CD4-positive, alpha-beta T cell (primary cell): ENCODE measurements at regions of chr9 and their contacts with region 1.

Region 1: GRCh38 chr9:34637356-34638137 is at the start of gene SIGMAR1:
- DNase-seq: peak; percentile 85 to 95 (median 92)
- ATAC-seq: peak; percentile 92
- H3K4me3 ChIP-seq: peak within 1 kb of the TSS; percentile 86
- H3K4me3 Mint-ChIP-seq: peak within 1 kb of the TSS; percentile 89
- H3K27ac ChIP-seq: peak within 1 kb of the TSS; percentile 72 to 84
- H3K27ac Mint-ChIP-seq: peak within 1 kb of the TSS; percentile 89
- H3K4me1 ChIP-seq: peaks cover 41% of the 10 kb centered on the region
- H3K4me1 Mint-ChIP-seq: peaks cover 45% of the 10 kb centered on the region
- H3K27me3 ChIP-seq: no peaks in the 10 kb centered on the region
- H3K27me3 Mint-ChIP-seq: no peaks in the 10 kb centered on the region
- CTCF ChIP-seq: no peak
- total RNA-seq, gene SIGMAR1: 11.7 to 12.1 TPM

Region 2: GRCh38 chr9:34048923-34049697 is 588.4 kb before region 1 on chr9:
- CTCF ChIA-PET with region 1: no interaction called
- POLR2A ChIA-PET with region 1: no interaction called
- intact Hi-C with region 1: loop called in 1 of 2 experiments (anchors 10 kb)
- DNase-seq: peak; percentile 92 to 98 (median 96)
- ATAC-seq: peak; percentile 82
- H3K4me3 ChIP-seq: peak overlapping the region; percentile 98
- H3K4me3 Mint-ChIP-seq: peak overlapping the region; percentile 92
- H3K27ac ChIP-seq: peak overlapping the region; percentile 83 to 93
- H3K27ac Mint-ChIP-seq: peak overlapping the region; percentile 97
- H3K4me1 ChIP-seq: peaks cover 26% of the 10 kb centered on the region
- H3K4me1 Mint-ChIP-seq: peaks cover 34% of the 10 kb centered on the region
- H3K27me3 ChIP-seq: no peaks in the 10 kb centered on the region
- H3K27me3 Mint-ChIP-seq: no peaks in the 10 kb centered on the region
- CTCF ChIP-seq: no peak

Region 3: GRCh38 chr9:34500623-34501267 is 136.8 kb before region 1 on chr9:
- CTCF ChIA-PET with region 1: no interaction called
- POLR2A ChIA-PET with region 1: no interaction called
- intact Hi-C with region 1: loop called in 1 of 2 experiments (anchors 5 kb)
- DNase-seq: peak; percentile 47 to 81 (median 66)
- ATAC-seq: peak; percentile 94
- H3K4me3 ChIP-seq: no peak overlapping the region
- H3K4me3 Mint-ChIP-seq: no peak overlapping the region
- H3K27ac ChIP-seq: no peak overlapping the region
- H3K27ac Mint-ChIP-seq: no peak overlapping the region
- H3K4me1 ChIP-seq: peaks cover 3% of the 10 kb centered on the region
- H3K4me1 Mint-ChIP-seq: no peaks in the 10 kb centered on the region
- H3K27me3 ChIP-seq: no peaks in the 10 kb centered on the region
- H3K27me3 Mint-ChIP-seq: peaks cover 10% of the 10 kb centered on the region
- CTCF ChIP-seq: peak; percentile 97

Region 4: DNA sequence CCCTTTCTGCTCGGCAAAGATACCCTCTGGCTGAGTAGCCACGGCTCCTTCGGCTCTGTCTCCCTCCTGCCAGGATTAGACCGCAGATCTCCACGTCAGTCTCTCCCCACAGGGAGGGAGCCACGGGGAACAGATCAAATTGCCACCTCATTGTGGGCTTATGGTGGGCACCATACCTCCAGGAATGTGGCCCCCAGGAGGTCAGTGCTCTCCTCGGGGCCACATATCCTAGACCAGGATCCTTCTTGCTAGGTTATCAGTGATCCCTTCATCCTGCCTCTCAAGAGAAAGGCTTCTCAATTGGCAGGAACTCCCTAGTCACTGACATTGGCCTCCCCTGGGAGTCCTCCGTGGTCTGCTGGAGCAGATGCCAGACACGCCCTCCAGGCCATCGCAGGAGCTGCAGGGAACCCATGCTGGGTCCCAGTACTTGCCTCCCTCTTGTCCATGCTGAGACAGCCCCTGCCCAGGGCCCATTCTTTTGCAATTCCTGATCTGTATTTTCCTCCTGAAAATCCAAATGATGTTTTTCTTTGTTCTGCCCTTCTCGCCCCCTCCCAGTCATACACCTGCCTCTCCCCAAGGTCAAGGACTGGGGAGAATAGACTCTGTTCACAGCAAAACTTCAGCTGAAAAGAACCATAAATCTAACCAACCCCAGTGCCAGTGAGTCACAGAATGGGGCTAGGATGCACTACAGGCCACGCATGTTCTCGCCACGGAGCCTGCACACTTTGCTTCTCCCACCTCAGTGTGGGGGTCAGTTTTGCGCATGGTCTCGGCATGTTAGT is 83.1 kb before region 1 on chr9:
- CTCF ChIA-PET with region 1: no interaction called
- POLR2A ChIA-PET with region 1: no interaction called
- intact Hi-C with region 1: no loop called
- DNase-seq: no peak
- ATAC-seq: no peak
- H3K4me3 ChIP-seq: no peak overlapping the region
- H3K4me3 Mint-ChIP-seq: no peak overlapping the region
- H3K27ac ChIP-seq: no peak overlapping the region
- H3K27ac Mint-ChIP-seq: no peak overlapping the region
- H3K4me1 ChIP-seq: no peaks in the 10 kb centered on the region
- H3K4me1 Mint-ChIP-seq: no peaks in the 10 kb centered on the region
- H3K27me3 ChIP-seq: peaks cover 12 to 13% of the 10 kb centered on the region in 2 experiments
- H3K27me3 Mint-ChIP-seq: peaks cover 41% of the 10 kb centered on the region
- CTCF ChIP-seq: no peak

Region 5: DNA sequence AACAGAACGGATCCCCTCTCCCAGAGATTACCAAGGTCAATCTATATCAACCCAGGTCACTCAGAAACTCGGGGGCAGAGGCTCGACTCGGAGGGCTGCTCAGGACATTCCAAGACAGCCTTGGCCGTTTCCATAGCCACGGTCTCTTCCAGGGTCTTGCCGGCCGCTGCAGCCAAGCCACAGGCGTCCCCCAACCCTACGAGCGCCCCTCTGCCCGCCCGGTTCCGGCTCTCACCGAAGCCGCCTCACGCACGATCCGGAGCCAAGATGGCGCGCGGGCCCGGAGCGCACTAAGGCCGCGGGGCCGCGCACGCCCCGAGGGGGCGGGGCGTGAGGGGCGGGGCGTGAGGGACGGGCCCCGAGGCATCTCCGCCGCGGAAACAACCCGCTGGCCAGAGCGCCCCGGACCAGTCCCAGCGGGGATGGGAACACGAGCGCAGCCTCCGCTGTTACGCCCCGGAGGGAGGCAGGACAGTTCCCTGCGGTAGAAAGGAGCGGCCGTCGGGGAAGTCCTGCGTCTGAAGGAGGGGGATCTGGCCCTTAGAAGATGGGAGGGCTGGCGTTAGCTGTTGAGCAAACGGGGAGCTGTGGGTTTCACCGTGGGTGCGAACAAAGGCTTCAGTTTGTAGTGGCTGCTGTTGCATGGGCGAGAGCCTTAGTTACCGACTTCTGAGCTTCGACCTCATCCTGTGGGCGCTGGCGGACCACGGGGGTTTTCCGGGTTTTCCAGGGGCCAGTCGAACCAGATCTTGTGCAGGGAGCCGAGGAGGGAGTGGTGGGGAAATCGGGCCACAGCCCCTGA is 25.5 kb before region 1 on chr9 and contains the start of gene RPP25L:
- CTCF ChIA-PET with region 1: interaction called, 41 read pairs
- POLR2A ChIA-PET with region 1: interaction called, 23 read pairs
- intact Hi-C with region 1: loop called (anchors 1 kb)
- DNase-seq: peak; percentile 64 to 94 (median 82)
- ATAC-seq: peak; percentile 91
- H3K4me3 ChIP-seq: peak within 1 kb of the TSS; percentile 95
- H3K4me3 Mint-ChIP-seq: peak within 1 kb of the TSS; percentile 84
- H3K27ac ChIP-seq: peak within 1 kb of the TSS; percentile 79 to 83
- H3K27ac Mint-ChIP-seq: peak within 1 kb of the TSS; percentile 40
- H3K4me1 ChIP-seq: peaks cover 28% of the 10 kb centered on the region
- H3K4me1 Mint-ChIP-seq: peaks cover 24% of the 10 kb centered on the region
- H3K27me3 ChIP-seq: no peaks in the 10 kb centered on the region
- H3K27me3 Mint-ChIP-seq: no peaks in the 10 kb centered on the region
- CTCF ChIP-seq: no peak
- total RNA-seq, gene RPP25L: 4.6 to 5.7 TPM

Region 6: GRCh38 chr9:34665381-34666250 is 28.1 kb after region 1 on chr9:
- CTCF ChIA-PET with region 1: interaction called, 15 read pairs
- POLR2A ChIA-PET with region 1: interaction called, 54 read pairs
- intact Hi-C with region 1: loop called in 1 of 2 experiments (anchors 2 kb)
- DNase-seq: peak; percentile 81 to 97 (median 88)
- ATAC-seq: peak; percentile 79
- H3K4me3 ChIP-seq: peak overlapping the region; percentile 90
- H3K4me3 Mint-ChIP-seq: peak overlapping the region; percentile 97
- H3K27ac ChIP-seq: peak overlapping the region; percentile 95 to 99
- H3K27ac Mint-ChIP-seq: peak overlapping the region; percentile 99
- H3K4me1 ChIP-seq: peaks cover 55% of the 10 kb centered on the region
- H3K4me1 Mint-ChIP-seq: peaks cover 52% of the 10 kb centered on the region
- H3K27me3 ChIP-seq: no peaks in the 10 kb centered on the region
- H3K27me3 Mint-ChIP-seq: no peaks in the 10 kb centered on the region
- CTCF ChIP-seq: no peak

Region 7: GRCh38 chr9:35071814-35072460 is 434.4 kb after region 1 on chr9:
- CTCF ChIA-PET with region 1: no interaction called
- POLR2A ChIA-PET with region 1: no interaction called
- intact Hi-C with region 1: loop called in 1 of 2 experiments (anchors 10 kb)
- DNase-seq: peak; percentile 42 to 87 (median 59)
- ATAC-seq: peak; percentile 45
- H3K4me3 ChIP-seq: peak overlapping the region; percentile 69
- H3K4me3 Mint-ChIP-seq: peak overlapping the region; percentile 85
- H3K27ac ChIP-seq: peak overlapping the region; percentile 92 to 96
- H3K27ac Mint-ChIP-seq: peak overlapping the region; percentile 87
- H3K4me1 ChIP-seq: peaks cover 42% of the 10 kb centered on the region
- H3K4me1 Mint-ChIP-seq: peaks cover 56% of the 10 kb centered on the region
- H3K27me3 ChIP-seq: no peaks in the 10 kb centered on the region
- H3K27me3 Mint-ChIP-seq: no peaks in the 10 kb centered on the region
- CTCF ChIP-seq: peak; percentile 35

Region 8: DNA sequence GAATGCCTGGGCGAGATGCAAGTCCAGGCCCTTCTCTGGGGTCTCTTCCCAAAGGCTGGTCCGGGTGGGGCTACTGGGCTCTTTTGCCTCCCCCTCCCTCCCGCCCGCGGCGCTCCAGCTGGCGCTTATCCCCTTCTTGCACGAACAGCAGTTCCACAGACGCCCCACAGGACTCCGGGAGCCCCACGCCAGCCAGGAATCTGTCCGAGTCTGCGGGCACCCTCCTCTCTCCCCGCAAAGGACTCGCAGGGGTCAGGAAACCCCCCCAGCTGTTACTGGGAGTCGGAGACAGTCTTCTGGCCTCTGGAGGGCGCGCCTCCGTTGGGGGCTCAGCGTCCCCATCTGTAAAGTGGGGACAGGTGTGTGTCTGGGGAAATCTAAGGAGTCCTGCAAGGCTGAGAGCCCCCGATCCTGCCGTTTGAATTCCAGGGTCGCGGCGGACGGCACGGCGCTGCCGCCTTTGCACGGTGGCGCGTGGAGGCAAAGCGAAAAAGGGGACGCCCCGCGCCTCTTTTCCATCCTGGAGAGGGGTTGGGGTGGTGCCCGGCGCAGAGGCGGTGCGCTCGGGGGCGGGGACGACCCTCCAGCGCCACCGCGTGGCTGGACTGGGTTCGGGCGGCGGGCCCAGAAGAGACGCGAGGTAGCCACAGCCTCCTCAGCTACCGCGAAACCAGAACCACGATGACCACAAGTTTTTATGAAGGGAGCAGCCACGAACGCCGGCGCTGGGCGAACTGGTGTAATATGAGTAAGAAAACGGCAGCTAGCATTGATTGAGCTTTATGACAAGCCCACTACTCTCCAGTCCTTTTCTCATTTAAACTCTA is 1528.8 kb after region 1 on chr9:
- CTCF ChIA-PET with region 1: no interaction called
- POLR2A ChIA-PET with region 1: no interaction called
- intact Hi-C with region 1: no loop called
- DNase-seq: peak; percentile 57 to 91 (median 78)
- ATAC-seq: peak; percentile 98
- H3K4me3 ChIP-seq: peak overlapping the region; percentile 62
- H3K4me3 Mint-ChIP-seq: peak overlapping the region; percentile 51
- H3K27ac ChIP-seq: no peak overlapping the region
- H3K27ac Mint-ChIP-seq: no peak overlapping the region
- H3K4me1 ChIP-seq: peaks cover 15% of the 10 kb centered on the region
- H3K4me1 Mint-ChIP-seq: no peaks in the 10 kb centered on the region
- H3K27me3 ChIP-seq: no peaks in the 10 kb centered on the region
- H3K27me3 Mint-ChIP-seq: no peaks in the 10 kb centered on the region
- CTCF ChIP-seq: peak; percentile 93